Dendritic cell treated with granulocyte-macrophage colony-stimulating factor and Interleukin-4, amounts not matched to agents 40 ng/mL and 50 ng/mL, for 4 days (primary cell): ENCODE measurements at regions of chr2 and their contacts with region 1.

Region 1: DNA sequence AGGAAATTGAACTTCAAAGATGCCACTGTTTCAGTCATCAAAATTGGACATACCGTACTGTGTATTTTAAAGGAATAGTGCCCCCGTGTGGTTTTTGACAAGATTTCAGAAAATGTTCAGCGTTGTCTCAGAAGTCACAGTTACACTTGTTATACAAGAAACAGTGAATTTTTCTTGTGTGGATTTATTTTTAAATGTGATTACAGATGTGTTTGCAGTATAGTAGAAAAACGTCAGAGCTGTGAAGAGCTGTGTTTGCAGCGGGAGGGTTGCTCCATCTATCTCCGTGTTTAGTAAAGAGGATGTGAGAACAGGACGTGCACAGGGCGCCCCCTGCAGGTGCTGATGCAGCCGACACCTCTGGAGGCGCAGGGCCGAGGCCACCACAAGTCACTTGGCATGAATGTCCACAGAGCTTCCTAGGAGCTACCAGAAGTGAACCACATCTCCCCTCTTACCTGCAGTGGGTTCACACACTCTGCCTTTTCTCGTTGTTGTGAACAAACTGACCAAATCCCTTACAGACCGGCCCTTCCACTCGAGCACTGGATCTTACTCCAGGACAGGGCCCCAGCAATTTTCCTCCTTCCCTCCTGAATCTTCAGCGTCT is 73.1 kb downstream of the CACNB4 start:
- H3K4me3 Mint-ChIP-seq: peak overlapping the region; percentile 69
- H3K27ac Mint-ChIP-seq: peak overlapping the region; percentile 50
- H3K4me1 Mint-ChIP-seq: peaks cover 29% of the 10 kb centered on the region
- H3K27me3 Mint-ChIP-seq: no peaks in the 10 kb centered on the region

Region 2: DNA sequence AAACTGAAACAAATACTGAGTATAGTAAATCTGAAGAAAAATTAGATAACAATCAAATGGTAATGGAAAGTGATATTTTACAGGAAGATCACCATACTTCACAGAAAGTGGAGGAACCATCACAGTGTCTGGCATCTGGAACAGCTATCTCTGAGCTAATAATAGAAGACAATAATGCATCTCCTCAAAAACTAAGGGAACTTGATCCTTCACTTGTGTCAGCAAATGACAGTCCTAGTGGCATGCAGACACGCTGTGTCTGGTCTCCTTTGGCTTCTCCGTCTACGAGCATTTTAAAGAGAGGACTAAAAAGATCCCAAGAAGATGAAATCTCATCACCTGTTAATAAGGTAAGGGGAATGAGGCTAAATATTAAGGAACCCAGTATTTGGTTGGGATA is 560.0 kb before region 1 on chr2:
- intact Hi-C with region 1: loop called (anchors 10 kb)
- H3K4me3 Mint-ChIP-seq: no peak overlapping the region
- H3K27ac Mint-ChIP-seq: no peak overlapping the region
- H3K4me1 Mint-ChIP-seq: no peaks in the 10 kb centered on the region
- H3K27me3 Mint-ChIP-seq: no peaks in the 10 kb centered on the region

Region 3: GRCh38 chr2:151979694-151980093 is 46.1 kb before region 1 on chr2:
- intact Hi-C with region 1: no loop called
- H3K4me3 Mint-ChIP-seq: no peak overlapping the region
- H3K27ac Mint-ChIP-seq: no peak overlapping the region
- H3K4me1 Mint-ChIP-seq: peaks cover 3% of the 10 kb centered on the region
- H3K27me3 Mint-ChIP-seq: no peaks in the 10 kb centered on the region

Region 4: DNA sequence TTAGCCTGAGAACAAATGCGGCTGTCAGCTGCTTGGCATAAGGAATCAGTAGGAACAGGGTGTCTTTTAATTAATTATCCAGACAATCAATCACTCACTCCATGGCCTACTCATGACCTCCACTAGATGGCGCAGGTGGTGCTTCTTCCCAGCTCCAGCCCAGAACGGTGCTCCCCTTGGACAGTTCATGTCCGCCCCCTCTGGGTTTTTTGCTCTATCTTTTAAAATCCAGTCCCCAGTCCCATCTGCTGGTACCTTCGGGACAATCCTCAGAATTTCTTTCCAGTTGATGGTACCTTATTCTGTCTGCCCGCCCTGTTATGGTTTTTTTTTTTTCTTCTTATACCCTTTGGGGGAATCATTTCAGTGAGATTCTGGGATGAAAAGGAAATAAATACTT is 26.7 kb before region 1 on chr2:
- intact Hi-C with region 1: loop called (anchors 1 kb)
- H3K4me3 Mint-ChIP-seq: no peak overlapping the region
- H3K27ac Mint-ChIP-seq: no peak overlapping the region
- H3K4me1 Mint-ChIP-seq: peaks cover 2% of the 10 kb centered on the region
- H3K27me3 Mint-ChIP-seq: peaks cover 5% of the 10 kb centered on the region

Region 5: DNA sequence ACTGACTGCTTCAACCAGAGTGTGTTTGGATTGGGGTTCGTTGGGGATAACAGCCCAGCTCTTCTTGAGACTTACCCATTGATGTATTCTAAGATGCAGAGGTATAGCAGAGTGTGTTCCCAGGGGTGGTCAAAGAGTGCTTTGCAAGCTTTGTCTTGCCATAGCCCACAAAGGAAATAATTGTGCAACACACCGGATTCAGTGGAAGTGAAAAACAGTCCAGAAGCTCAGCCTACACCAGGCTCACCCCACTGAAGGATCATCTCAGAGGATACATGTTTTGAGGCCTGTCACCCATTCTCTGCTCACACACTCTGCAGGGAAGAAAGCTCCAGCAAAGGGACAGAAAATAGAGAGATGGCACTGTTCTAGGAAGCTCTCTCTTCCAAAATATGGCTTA is 63.5 kb after region 1 on chr2:
- intact Hi-C with region 1: no loop called
- H3K4me3 Mint-ChIP-seq: peak overlapping the region; percentile 49
- H3K27ac Mint-ChIP-seq: peak overlapping the region; percentile 81
- H3K4me1 Mint-ChIP-seq: peaks cover 41% of the 10 kb centered on the region
- H3K27me3 Mint-ChIP-seq: no peaks in the 10 kb centered on the region